ENCODE measurements at regions of chr5 and their contacts with region 1.

Region 1: DNA sequence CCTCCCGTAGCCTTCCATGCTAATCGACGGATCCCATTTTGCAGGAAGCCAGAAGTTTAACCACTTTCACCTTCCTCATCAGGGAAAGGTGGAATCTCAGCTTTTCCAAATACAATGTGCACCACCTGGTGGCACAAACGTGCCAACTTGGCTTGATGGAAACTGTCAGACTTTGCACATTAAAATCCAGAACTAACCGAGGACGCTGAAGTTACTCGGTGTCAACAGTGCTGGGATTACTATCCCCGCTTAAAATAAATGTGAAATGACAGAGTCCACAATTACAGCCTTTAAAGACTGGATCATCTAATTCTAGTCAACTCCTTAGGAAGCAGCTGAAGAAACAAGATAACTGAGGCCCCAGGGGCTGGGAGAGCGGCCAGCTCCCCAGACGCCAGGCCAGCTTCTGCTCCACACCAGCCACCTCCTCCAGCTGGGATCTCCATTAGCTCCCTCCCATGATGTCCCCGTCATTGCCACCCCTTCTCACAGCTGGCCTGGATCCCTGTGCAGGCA is 50.1 kb upstream of the RETREG1 start:
- DNase-seq: no peak

Region 2: DNA sequence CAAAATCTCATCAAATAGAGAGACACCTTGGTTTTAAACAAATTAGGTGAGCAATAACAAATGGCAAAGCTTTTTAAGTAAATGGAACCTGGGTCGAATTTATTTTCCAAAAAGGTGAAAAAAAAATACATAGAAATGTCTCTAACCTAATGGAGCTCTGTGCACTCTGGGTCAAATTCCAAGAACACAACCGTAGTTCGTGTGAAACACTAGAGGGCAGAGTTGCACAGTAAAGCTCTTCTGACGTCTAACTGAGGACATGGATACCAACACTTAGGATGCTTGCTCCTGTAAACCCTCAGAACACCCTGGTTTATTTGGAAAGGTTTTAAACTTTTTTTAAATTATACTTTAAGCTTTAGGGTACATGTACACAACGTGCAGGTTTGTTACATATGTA is 506.2 kb before region 1 on chr5:
- intact Hi-C with region 1: loop called (anchors 10 kb)
- DNase-seq: no peak

Region 3: DNA sequence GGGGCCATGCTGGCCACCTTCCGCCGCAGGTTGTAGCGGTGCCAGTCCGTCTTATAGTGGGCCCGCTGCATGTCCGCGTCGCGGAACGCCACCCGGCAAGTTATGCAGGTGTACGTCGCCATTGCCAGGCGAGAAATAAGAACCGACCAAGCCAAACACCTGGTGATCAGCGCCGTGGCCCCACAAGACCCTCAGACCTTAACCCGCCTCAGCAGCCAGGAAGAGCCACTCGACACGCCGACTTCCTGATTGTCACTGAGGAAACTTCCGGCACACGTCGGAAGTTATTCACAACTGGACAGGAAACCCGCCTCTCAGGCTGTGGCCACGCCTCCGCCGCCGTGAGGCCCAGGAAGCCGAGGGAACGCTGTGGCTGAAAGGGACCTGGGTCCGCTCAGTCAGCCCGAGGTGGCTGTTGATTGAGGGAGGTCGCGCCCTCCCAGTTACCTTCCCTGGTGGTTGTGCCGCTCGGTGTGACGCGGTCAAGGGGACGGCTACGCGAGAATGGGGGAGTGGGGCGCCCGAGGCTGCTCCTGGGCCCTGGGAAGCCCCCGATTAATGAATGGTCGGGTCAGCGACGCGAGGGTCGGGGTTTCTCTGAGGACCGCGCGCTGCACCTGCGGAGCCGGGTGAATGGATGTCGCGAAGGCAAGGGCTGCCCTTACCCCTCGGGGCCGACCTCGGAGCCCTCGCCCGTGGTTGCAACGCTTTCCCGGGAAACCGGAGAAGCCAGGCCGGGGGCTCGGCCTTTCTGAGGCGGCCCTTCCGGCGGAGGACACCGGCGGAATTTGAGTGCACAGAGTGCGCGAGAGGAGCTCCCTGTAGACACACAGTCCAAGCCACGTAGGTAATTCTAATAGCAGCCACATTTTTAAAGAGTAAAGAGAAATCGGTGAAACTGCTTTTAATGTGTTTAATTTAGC is 201.1 kb before region 1 on chr5 and contains the start of gene ZNF622:
- intact Hi-C with region 1: loop called (anchors 5 kb)
- DNase-seq: peak; percentile 97
- total RNA-seq, gene ZNF622: 49.0 TPM

Region 4: GRCh38 chr5:16552666-16553343 is 114.1 kb before region 1 on chr5:
- intact Hi-C with region 1: loop called (anchors 2 kb)
- DNase-seq: peak; percentile 83

Region 5: GRCh38 chr5:16834029-16834428 is 167.1 kb after region 1 on chr5:
- intact Hi-C with region 1: no loop called
- DNase-seq: no peak

Measured in cardiac septum (tissue), 1 donor.